H1 (cell line): ENCODE measurements at regions of chr4 and their contacts with region 1.

Region 1: DNA sequence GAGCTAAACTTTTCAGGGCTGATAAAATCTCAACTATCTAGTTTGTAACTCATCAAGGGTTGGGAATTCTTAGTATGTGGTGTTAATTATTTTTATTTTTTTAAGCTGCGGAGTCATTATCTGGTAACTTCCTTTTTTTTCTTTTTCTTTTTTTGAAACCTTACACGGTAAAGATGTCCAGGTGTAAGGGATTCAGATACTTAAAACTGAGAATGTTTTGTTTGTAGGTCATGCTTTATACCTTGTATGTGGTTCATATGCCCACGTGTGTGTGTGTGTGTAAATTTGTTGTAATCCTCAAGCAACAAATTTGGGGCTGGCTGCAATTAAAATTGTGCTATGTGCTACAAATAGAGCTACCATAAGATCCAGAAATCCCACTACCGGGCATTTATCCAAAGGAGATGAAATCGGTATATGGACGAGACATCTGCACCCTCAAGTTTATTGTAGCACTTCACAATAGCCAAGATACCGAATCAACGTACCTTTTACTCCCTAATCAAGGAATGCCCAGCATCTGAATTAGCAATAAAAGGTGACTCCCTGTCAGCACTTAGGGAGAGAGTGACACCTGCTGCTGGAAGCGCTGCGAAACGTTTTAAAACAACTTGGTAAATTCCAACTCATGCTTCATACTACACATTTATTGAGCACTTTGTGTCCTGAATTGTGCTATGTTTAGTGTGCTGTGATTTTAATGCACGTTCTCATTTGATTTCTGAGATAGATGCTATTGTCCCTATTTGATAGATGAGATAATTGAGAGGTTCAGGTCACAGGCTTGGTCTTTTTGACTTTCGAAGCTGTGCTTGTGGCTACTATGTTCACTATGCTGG is 16.1 kb downstream of the MSMO1 start:
- DNase-seq: no peak
- H3K4me3 ChIP-seq: no peak overlapping the region
- H3K27ac ChIP-seq: no peak overlapping the region
- H3K4me1 ChIP-seq: no peaks in the 10 kb centered on the region
- H3K27me3 ChIP-seq: no peaks in the 10 kb centered on the region
- CTCF ChIP-seq: peak; percentile 20 to 57 (median 54)
- EP300 ChIP-seq: no peak
- POLR2A ChIP-seq: no peak; a peak in 1 of 3 replicates
- RAD21 ChIP-seq: peak; percentile 76 to 82

Region 2: GRCh38 chr4:165112368-165113139 is 231.0 kb before region 1 on chr4 and contains the start of gene TMEM192:
- CTCF ChIA-PET with region 1: interaction called, 10 read pairs
- POLR2A ChIA-PET with region 1: interaction called, 3 read pairs
- DNase-seq: peak; percentile 73 to 97
- H3K4me3 ChIP-seq: peak within 1 kb of the TSS; percentile 66 to 86 (median 74)
- H3K27ac ChIP-seq: peak within 1 kb of the TSS; percentile 13; the same call in 1 of the 2 replicates
- H3K4me1 ChIP-seq: peaks cover 0 to 3% (median 0%) of the 10 kb centered on the region in 4 experiments; a peak in 1 of 7 replicates
- H3K27me3 ChIP-seq: peaks cover 0 to 1% (median 0%) of the 10 kb centered on the region in 4 experiments; a peak in 1 of 7 replicates
- CTCF ChIP-seq: peak; percentile 11 to 39 (median 25); a peak in 3 of 4 replicates
- EP300 ChIP-seq: no peak
- POLR2A ChIP-seq: peak; percentile 72 to 85
- RAD21 ChIP-seq: no peak
- total RNA-seq, gene TMEM192: 10.2 and 10.9 TPM in 2 replicates

Region 3: DNA sequence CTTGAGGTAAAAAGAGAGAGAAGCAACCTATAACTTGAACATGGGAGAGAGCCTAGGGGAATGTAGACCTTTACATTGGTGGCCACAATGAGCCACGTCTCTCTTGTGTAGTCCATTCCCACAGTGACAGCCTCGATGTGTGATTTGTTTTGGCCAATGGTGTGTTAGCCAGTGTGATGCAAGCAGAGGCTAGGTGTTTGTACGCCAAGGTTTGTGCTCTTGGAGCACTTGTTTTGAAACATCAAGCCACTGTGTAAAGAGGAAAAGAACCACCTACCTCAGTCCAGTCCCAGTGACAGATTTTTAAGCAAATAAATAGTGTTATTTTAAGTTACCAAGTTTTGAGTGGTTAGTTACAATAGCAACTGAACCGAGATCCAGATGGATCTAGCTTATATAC is 207.0 kb before region 1 on chr4:
- CTCF ChIA-PET with region 1: interaction called, 235 read pairs
- POLR2A ChIA-PET with region 1: interaction called, 8 read pairs
- DNase-seq: no peak
- H3K4me3 ChIP-seq: no peak overlapping the region
- H3K27ac ChIP-seq: no peak overlapping the region
- H3K4me1 ChIP-seq: no peaks in the 10 kb centered on the region
- H3K27me3 ChIP-seq: no peaks in the 10 kb centered on the region
- CTCF ChIP-seq: no peak
- EP300 ChIP-seq: no peak
- POLR2A ChIP-seq: no peak
- RAD21 ChIP-seq: no peak

Region 4: DNA sequence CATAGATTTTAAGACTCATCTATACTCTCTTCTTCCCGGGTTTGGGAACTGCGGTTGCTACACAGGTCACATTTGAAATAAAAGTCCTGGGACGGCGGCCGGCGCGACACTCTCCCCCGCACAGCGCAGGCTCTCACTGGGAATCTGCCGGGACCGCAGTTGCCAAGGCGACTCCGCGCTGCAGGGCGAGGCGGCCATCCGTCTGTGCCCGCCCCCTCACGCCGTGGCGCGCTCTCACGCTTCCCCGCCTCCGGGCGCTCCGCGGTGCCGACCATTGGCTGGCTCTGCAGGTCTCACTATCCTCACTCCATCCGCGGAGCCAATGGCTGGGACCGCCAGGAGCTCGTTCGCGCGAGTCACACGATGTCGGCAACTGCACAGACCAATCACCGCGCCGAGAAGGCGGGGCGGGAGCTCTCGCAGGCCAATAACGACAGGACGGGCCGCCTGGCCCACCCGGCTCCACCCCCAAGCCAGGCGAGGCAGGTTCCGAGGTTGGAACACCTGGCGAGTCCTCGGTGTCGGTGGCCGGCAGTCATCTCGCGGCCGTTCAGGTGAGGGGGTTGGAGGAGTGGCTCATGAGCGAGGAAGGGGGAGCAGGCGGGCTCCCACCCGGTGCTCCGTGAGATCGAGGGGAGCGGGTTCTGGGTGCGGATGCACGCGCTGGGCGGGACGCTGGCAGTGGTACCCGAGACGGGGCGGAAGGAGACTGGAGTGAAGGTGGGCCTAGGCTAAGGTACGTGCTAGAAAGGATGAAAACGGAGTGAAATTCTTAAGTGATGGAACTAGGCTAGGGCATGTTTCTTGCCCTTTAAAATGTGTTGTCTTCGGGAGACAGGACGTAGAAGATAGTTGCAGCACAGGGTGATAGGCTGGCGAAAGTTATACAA is 16.1 kb before region 1 on chr4 and contains the start of gene MSMO1:
- CTCF ChIA-PET with region 1: interaction called, 22 read pairs
- POLR2A ChIA-PET with region 1: interaction called, 11 read pairs
- DNase-seq: peak; percentile 95 to 98
- H3K4me3 ChIP-seq: peak within 1 kb of the TSS; percentile 93 to 98 (median 96)
- H3K27ac ChIP-seq: peak within 1 kb of the TSS; percentile 75
- H3K4me1 ChIP-seq: peaks cover 5 to 9% (median 7%) of the 10 kb centered on the region in 4 experiments
- H3K27me3 ChIP-seq: no peaks in the 10 kb centered on the region
- CTCF ChIP-seq: no peak
- EP300 ChIP-seq: no peak
- POLR2A ChIP-seq: peak; percentile 68 to 73; a peak in 2 of 3 replicates
- RAD21 ChIP-seq: no peak
- total RNA-seq, gene MSMO1: 105 and 109 TPM in 2 replicates

Region 5: DNA sequence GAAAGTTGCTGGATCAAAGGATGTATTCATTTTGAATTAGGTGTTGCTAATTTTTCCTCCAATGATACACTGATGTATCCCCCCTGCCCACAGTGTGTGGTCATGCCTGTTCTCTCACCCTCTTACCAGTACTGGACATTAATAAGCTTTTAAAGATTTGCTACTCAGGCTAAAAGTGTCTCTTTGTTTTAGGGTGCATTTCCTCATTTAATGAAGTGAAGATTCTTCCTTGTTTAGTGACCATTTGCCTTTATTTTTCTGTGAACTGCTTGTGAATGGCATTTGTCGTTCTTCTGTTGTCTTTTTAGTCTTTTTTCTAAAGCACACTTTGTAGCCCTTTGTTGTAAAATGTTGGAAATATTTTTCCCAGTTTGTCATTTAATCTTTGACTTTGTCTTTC is 11.1 kb before region 1 on chr4:
- CTCF ChIA-PET with region 1: interaction called, 22 read pairs
- POLR2A ChIA-PET with region 1: interaction called, 11 read pairs
- DNase-seq: no peak
- H3K4me3 ChIP-seq: peak overlapping the region in 2 of 4 experiments; percentile 2 to 93; a peak in 3 of 8 replicates
- H3K27ac ChIP-seq: no peak overlapping the region
- H3K4me1 ChIP-seq: peaks cover 0 to 6% (median 3%) of the 10 kb centered on the region in 4 experiments; a peak in 4 of 7 replicates
- H3K27me3 ChIP-seq: no peaks in the 10 kb centered on the region
- CTCF ChIP-seq: no peak
- EP300 ChIP-seq: no peak
- POLR2A ChIP-seq: no peak
- RAD21 ChIP-seq: no peak

Region 6: DNA sequence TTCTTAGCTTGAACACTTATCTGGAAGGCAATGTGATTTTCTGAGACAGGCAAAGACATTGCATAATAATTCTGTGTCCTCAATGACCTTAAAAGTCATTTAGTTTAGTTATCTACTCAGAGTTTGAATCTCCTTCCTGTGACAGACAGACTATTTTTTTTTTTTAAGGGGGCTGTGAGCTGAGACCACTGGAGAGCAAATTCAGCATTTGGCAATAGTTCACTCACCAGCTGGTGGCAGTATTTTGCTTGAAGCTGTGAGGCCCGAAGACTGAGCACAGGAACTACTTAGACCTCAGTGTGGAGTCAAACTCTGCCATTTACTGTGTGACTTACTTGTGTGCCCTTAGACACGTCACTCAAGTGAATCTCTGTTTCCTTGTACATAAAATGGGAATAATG is 12.3 kb after region 1 on chr4:
- CTCF ChIA-PET with region 1: interaction called, 21 read pairs
- POLR2A ChIA-PET with region 1: interaction called, 3 read pairs
- DNase-seq: no peak
- H3K4me3 ChIP-seq: no peak overlapping the region
- H3K27ac ChIP-seq: no peak overlapping the region
- H3K4me1 ChIP-seq: no peaks in the 10 kb centered on the region
- H3K27me3 ChIP-seq: no peaks in the 10 kb centered on the region
- CTCF ChIP-seq: peak; percentile 61 to 83 (median 69)
- EP300 ChIP-seq: no peak
- POLR2A ChIP-seq: no peak
- RAD21 ChIP-seq: peak; percentile 72 to 80

Region 7: DNA sequence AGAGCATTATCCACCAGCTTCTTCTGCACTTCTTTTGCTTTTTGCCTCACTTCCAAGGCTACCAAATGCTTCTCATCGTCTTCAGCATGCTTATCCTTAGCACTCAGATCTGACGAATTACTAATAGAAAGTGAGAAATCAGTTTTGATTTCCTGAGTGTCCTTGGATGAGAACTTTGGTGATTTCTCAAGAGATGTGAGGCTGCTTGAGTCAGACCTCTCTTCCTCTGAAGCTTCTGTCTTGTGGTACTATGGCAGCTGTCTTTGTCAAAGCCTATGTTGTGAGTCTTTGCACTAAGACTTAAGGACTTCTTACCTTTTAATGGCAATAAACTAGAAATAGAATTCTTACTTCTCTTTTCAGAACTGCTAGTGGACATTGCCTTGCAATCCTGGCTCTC is 205.1 kb after region 1 on chr4:
- CTCF ChIA-PET with region 1: no interaction called
- POLR2A ChIA-PET with region 1: no interaction called
- DNase-seq: no peak
- H3K4me3 ChIP-seq: no peak overlapping the region
- H3K27ac ChIP-seq: no peak overlapping the region
- H3K4me1 ChIP-seq: no peaks in the 10 kb centered on the region
- H3K27me3 ChIP-seq: no peaks in the 10 kb centered on the region
- CTCF ChIP-seq: no peak
- EP300 ChIP-seq: no peak
- POLR2A ChIP-seq: no peak
- RAD21 ChIP-seq: no peak